Activated CD4-positive, alpha-beta T cell treated with anti-CD3 and anti-CD28 coated beads for 36 hours (primary cell): ENCODE measurements at regions of chr12 and their contacts with region 1.

Region 1: DNA sequence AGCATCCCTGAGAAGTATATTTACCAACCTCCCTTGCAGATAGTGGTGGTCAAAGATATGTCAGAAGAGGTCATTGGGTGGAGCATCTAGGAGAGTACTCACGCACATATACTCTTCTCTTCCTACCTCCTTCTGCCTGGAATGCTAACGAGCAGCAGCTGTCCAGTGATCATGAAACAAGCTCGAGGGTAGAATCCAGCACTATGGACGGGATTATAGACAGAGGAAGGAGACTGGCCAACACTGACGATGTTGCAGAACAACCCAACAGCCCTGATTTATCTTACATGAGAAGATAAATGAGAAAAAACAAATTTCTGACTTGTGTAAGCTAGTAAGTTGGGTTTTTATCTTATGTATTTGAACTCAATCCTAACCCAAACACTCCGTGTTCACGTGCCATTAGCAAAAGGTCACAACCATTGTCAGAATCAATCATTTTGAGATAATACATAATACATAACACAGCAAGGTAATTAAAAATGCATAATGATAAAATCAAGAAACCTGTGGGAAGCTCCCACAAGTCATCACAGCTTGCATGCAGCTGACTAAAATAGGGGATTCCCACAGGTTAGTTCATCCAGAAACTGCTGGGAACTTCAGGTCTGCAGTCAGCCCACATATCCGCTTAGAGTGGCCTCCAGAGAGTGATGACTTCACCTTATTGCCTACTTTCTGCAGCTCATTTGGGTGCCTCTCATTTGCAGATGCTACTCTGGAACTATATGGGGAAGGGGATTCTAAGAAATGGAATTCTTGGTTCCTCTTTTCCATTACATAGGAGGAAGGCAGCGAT is 36.3 kb upstream of the STK38L start:
- DNase-seq: peak; percentile 74
- ATAC-seq: peak; percentile 99
- H3K4me3 Mint-ChIP-seq: no peak overlapping the region
- H3K27ac Mint-ChIP-seq: peak overlapping the region; percentile 65
- H3K4me1 Mint-ChIP-seq: peaks cover 25% of the 10 kb centered on the region
- H3K27me3 Mint-ChIP-seq: no peaks in the 10 kb centered on the region

Region 2: DNA sequence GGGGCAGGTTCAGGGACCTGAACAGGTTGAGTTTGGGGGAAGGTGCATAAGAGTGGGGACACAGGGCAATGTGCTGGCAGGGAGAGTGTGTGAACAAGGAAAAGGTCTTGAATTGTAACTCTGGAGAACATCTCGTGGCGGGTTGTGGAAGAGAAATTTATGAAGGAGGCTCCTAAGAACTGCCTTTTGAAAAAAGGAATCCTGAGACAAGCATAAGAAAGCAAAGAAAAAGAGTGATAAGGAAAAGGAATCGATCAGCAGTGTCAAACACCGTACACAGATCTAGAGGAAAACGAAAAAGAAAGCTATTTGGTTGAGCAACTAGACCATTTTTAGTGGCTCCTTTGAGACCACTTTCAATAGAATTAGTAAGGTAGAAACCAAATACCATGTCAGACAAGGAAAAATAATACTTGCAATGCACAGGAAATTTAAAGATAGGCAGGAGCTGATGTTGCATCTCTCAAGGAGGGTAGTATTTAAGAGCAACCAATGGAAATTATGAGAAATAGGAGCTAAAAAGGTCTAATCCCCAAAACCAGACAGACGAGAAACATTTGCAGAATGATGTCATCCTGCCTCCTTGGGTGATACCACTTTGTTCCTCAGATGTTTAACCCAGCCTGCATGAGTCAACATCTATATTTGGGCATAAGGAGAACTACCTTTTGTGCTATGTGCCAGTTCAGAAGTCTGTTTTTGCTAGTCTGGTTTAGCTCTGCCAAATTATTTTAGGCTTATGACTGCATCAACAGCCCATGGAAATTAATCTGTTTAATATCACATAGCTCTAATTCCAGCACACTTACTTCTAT is 28.2 kb before region 1 on chr12:
- CTCF ChIA-PET with region 1: interaction called, 4 read pairs
- POLR2A ChIA-PET with region 1: interaction called, 4 read pairs
- intact Hi-C with region 1: loop called (anchors 1 kb)
- DNase-seq: peak; percentile 58
- ATAC-seq: peak; percentile 95
- H3K4me3 Mint-ChIP-seq: peak overlapping the region; percentile 7
- H3K27ac Mint-ChIP-seq: peak overlapping the region; percentile 90
- H3K4me1 Mint-ChIP-seq: peaks cover 41% of the 10 kb centered on the region
- H3K27me3 Mint-ChIP-seq: no peaks in the 10 kb centered on the region

Region 3: DNA sequence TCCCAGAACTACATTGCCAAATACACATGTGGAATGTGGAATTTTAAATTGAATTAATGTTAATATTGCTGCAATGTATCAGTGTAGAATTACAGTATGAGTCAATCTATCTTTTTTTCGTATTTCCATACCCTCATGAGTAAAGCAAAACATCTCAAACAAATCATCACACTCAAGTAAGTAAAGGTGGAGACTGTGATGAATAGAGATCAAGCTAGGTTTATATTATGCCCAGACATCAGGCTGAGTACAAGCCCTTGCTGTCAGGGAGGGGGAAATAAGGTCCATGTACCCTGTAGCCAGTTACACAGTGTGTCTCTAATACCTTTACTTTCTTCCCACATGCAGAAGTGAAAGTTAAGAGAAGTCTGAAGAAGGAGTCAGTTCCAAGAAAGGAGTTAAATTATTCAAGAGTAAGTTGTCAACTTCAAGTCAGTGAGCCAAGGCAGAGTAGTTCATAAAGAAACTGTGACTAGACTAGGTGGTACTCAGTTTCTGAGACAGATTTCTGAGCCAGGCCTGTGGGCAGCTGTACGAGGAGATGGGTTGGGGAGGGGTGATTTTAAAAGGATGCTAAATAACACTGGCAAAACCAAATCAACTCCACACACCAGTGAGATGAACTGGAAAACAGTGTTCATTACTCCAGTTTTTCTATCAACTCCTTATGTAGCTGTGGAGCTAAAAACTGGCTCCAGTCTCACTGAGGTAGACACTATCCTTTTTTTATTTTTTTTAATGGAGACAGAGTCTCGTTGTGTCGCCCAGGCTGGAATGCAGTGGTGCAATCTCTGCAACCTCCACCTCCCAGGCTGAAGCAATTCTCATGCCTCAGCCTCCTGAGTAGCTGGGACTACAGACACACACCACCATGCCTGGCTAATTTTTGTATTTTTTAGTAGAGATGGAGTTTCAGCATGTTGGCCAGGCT is 12.5 kb after region 1 on chr12:
- CTCF ChIA-PET with region 1: interaction called, 3 read pairs
- POLR2A ChIA-PET with region 1: no interaction called
- intact Hi-C with region 1: loop called (anchors 1 kb)
- DNase-seq: peak; percentile 46
- ATAC-seq: peak; percentile 93
- H3K4me3 Mint-ChIP-seq: no peak overlapping the region
- H3K27ac Mint-ChIP-seq: peak overlapping the region; percentile 84
- H3K4me1 Mint-ChIP-seq: peaks cover 20% of the 10 kb centered on the region
- H3K27me3 Mint-ChIP-seq: peaks cover 4% of the 10 kb centered on the region

Region 4: GRCh38 chr12:27237790-27238771 is 30.3 kb after region 1 on chr12:
- CTCF ChIA-PET with region 1: interaction called, 3 read pairs
- POLR2A ChIA-PET with region 1: no interaction called
- intact Hi-C with region 1: loop called (anchors 1 to 5 kb)
- DNase-seq: no peak
- ATAC-seq: peak; percentile 59
- H3K4me3 Mint-ChIP-seq: no peak overlapping the region
- H3K27ac Mint-ChIP-seq: peak overlapping the region; percentile 73
- H3K4me1 Mint-ChIP-seq: peaks cover 37% of the 10 kb centered on the region
- H3K27me3 Mint-ChIP-seq: peaks cover under 1% of the 10 kb centered on the region

Region 5: DNA sequence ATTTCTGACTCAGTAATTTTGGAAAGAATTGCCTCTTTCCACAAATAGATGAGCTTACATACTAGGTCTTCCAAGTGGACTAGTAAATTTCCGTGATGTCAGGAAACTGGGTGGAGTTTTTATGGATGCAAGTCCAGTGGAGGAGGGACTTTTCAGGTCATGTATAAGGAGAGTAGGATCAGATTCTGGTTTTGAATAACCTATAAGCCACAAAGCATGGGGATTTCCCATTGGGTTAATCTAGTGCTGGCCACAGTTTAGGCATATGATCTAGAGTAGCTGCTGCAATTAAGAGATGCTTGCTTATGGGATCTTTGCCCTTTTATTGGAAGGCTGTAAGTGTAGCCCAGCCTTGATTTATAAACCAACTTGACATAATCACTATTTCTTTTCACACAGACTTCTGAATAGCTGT is 70.0 kb after region 1 on chr12:
- CTCF ChIA-PET with region 1: no interaction called
- POLR2A ChIA-PET with region 1: no interaction called
- intact Hi-C with region 1: no loop called
- DNase-seq: peak; percentile 14
- ATAC-seq: peak; percentile 87
- H3K4me3 Mint-ChIP-seq: no peak overlapping the region
- H3K27ac Mint-ChIP-seq: peak overlapping the region; percentile 5
- H3K4me1 Mint-ChIP-seq: peaks cover 31% of the 10 kb centered on the region
- H3K27me3 Mint-ChIP-seq: no peaks in the 10 kb centered on the region